Endothelial cell of umbilical vein (primary cell): ENCODE measurements at regions of chr1 and their contacts with region 1.

Region 1: DNA sequence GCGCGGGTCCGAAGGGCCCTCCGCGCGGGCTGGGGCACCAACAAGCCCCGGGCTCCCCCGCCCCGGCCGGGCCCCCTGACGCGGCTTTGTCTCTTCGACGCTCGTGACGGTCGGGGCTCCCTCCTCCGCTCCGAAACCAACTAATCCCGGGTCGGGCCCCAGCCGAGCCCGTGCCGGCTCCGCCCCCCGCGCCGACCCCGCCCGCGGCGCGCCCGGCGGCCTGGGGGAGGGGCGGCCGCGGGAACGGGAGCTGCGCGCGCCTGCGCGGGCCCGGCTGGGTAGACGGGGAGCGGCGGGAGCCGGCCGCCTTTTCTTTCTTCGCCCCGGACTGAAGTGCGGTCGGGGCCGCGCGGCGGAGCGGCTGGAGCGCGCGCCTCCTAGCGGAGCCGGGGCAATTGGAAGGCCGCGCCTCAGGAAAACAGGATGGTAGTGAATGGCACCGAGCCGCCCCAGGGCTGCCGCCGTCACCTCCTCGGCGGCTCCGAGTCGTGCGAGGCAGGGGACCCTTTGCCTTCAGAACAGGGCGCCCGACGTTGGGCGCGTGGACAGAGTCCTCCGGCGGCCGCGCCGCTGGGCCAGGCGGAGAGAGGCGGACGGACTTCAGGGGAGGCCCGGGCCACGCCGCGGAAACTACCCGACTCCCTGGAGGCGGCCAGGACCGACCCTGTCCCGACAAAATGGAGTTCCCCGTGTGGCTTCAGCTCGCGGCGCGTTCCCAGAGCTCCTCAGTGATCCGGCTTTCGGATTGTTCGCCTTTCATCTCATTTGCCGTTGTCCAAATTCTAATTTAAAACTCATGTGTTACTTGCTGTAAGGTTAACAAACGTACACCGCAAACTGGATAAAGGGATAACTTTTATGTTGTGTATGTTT is at the start of gene TP53BP2:
- DNase-seq: peak; percentile 92
- H3K4me3 ChIP-seq: peak within 1 kb of the TSS; percentile 79 to 82 (median 81)
- H3K27ac ChIP-seq: peak within 1 kb of the TSS; percentile 99
- H3K4me1 ChIP-seq: peaks cover 18% of the 10 kb centered on the region
- H3K27me3 ChIP-seq: no peaks in the 10 kb centered on the region
- CTCF ChIP-seq: peak; percentile 58 to 84
- POLR2A ChIP-seq: peak; percentile 54
- total RNA-seq, gene TP53BP2: 43.2 and 51.9 TPM in 2 replicates

Region 2: DNA sequence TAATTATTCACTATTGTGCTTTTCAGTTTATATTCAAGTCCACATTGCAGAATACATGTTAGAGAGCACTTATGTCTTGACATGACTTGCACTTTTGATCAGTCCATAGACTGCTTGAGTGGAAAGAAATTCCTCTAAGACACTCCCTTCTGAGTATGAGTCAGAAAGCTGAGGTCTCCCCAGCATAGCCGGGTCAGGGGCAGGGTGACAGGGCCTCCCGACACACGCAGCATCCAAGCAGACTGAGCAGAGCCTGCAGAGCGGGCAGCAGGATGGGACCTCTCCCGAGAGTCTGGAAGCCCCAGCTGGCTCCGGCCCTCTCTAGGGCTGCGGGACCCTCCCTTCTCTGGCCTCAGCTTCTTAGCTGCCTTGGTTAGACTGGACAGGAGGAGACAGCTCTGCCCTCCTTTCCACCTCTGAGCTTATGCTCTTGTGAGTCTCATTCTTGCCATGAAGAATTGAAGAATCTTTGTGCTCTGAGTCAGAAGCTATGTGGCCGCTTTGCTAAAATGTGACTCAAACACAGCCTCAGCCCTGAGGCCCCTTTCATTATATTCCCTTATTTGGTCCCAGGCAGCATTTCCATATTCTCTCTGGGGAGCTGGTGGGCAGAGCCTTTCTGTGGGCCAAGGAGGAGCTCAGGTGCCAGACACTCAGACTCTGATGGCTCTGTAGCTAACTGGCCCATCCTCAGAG is 145.0 kb before region 1 on chr1:
- CTCF ChIA-PET with region 1: interaction called, 10 read pairs
- POLR2A ChIA-PET with region 1: no interaction called
- dilution Hi-C with region 1: no loop called
- intact Hi-C with region 1: loop called (anchors 2 kb)
- DNase-seq: peak; percentile 74
- H3K4me3 ChIP-seq: no peak overlapping the region
- H3K27ac ChIP-seq: peak overlapping the region; percentile 73
- H3K4me1 ChIP-seq: peaks cover 37% of the 10 kb centered on the region
- H3K27me3 ChIP-seq: no peaks in the 10 kb centered on the region
- CTCF ChIP-seq: no peak
- POLR2A ChIP-seq: peak; percentile 26

Region 3: DNA sequence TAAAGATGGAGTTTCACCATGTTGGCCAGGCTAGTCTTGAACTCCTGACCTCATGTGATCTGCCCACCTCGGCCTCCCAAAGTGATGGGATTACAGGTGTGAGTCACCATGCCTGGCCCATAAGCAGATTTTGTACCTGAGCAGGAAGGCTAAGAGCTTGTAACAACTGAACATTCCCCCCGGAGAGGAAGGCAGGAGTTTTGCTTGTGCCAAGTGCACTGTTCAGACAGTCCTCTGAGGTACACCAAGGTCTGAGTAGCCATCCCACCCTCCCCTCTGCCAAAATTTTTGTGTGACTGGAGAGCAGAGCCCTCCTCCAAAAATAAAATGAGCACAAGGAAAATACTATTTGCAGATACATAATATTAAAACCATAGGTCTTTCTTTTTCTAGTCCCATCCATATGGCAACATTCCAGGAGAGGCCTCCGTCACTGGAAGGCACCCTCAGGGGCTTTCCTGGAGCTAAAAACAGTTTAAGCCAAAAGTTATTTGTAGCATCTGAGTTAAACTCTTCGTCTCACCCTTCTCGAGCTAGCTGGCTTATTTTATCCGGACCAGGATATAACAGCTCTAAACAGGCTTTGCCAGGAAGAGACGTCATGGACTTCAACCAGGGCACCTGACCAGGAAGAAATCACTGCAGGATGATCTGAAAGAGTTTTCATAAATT is 106.5 kb before region 1 on chr1:
- CTCF ChIA-PET with region 1: no interaction called
- POLR2A ChIA-PET with region 1: no interaction called
- dilution Hi-C with region 1: no loop called
- intact Hi-C with region 1: no loop called
- DNase-seq: no peak
- H3K4me3 ChIP-seq: no peak overlapping the region
- H3K27ac ChIP-seq: no peak overlapping the region
- H3K4me1 ChIP-seq: peaks cover 52% of the 10 kb centered on the region
- H3K27me3 ChIP-seq: no peaks in the 10 kb centered on the region
- CTCF ChIP-seq: no peak
- POLR2A ChIP-seq: no peak

Region 4: DNA sequence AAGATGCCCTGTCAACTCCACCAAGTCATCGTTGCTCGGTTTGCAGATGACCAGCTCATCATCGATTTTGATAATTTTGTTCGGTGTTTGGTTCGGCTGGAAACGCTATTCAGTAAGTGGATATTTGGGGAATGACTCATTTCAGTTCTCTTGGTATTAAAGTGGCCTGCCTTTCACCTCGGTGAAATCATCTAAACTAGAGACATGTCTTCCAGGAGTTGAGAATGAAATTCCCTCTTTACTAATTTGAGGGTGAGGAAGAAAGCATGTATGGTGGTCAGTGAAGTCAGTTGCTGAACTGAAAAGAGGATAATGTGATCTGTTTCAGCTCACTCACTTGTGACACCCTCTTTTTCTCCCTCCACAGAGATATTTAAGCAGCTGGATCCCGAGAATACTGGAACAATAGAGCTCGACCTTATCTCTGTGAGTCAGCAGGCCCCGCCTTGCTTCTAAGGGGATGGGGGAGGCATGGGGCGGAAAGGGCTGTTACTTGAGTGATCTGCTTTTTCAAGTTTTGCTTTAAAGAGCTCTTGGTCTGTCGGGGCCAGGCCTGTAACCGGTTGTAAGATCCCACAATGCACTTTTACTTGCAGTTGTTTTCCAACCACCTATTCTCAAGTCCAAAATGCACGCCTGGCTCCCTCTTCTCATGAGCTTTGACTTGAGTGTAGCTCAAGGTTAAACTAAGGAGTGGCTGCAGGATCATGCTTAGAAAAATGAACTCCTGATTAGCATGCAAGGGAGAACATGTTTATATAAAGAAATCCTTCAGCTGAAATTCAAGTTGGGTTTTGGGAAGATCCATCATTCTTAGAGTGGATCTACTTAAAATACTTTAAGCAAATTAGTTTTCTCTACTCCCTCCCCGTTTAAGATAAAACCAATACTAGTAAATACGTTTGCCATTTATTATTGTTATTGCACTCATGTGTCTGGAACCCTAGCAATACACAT is 74.0 kb before region 1 on chr1:
- CTCF ChIA-PET with region 1: interaction called, 4 read pairs
- POLR2A ChIA-PET with region 1: interaction called, 3 read pairs
- dilution Hi-C with region 1: no loop called
- intact Hi-C with region 1: loop called (anchors 2 kb)
- DNase-seq: peak; percentile 95
- H3K4me3 ChIP-seq: peak overlapping the region in 1 of 3 experiments; percentile 2
- H3K27ac ChIP-seq: peak overlapping the region; percentile 78
- H3K4me1 ChIP-seq: peaks cover 68% of the 10 kb centered on the region
- H3K27me3 ChIP-seq: no peaks in the 10 kb centered on the region
- CTCF ChIP-seq: no peak
- POLR2A ChIP-seq: no peak

Region 5: DNA sequence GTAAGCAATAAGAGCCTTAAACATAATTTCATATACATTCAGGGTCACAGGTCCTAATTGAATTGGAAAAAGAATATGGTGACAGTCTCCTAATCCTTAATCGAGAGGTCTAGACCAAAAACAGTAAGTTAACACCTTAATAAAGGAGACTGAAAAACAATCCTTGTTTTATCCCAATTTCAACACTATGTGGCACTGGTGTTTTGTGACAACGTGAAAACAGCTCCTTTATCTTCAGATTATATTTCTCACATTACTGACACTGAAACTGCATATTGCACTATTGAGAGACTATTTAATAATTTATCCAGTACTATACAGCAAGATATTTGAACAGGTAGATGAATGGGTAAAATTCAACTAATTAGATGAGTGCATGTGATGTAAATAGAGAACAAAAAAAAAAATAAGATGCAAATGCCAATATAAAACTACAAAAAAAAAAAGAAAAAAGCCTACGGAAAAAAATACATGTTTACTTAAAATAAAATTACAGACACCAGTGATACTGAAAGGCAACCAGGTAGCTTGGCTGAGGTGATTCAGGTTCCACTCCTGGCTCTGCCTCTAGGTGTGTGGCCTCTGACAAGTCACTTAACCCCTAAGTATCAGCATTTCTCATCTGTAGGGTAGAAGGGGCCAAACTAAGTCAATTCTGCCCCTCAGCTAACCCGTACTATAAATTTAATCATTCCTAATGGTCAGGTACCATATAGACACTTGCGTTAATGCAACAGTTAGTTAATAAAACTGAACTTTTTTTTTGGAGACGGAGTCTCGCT is 34.2 kb before region 1 on chr1:
- CTCF ChIA-PET with region 1: interaction called, 41 read pairs
- POLR2A ChIA-PET with region 1: no interaction called
- dilution Hi-C with region 1: no loop called
- intact Hi-C with region 1: loop called (anchors 1 kb)
- DNase-seq: peak; percentile 68
- H3K4me3 ChIP-seq: no peak overlapping the region
- H3K27ac ChIP-seq: no peak overlapping the region
- H3K4me1 ChIP-seq: peaks cover 15% of the 10 kb centered on the region
- H3K27me3 ChIP-seq: no peaks in the 10 kb centered on the region
- CTCF ChIP-seq: peak; percentile 18 to 22
- POLR2A ChIP-seq: no peak

Region 6: GRCh38 chr1:223831755-223832636 is 14.1 kb before region 1 on chr1:
- CTCF ChIA-PET with region 1: interaction called, 17 read pairs
- POLR2A ChIA-PET with region 1: interaction called, 10 read pairs
- dilution Hi-C with region 1: no loop called
- intact Hi-C with region 1: loop called (anchors 1 kb)
- DNase-seq: peak; percentile 76
- H3K4me3 ChIP-seq: peak overlapping the region in 1 of 3 experiments; percentile 38
- H3K27ac ChIP-seq: peak overlapping the region; percentile 86
- H3K4me1 ChIP-seq: peaks cover 56% of the 10 kb centered on the region
- H3K27me3 ChIP-seq: no peaks in the 10 kb centered on the region
- CTCF ChIP-seq: no peak
- POLR2A ChIP-seq: no peak